ENCODE measurements at regions of chr6 and their contacts with region 1.

Region 1: GRCh38 chr6:36759148-36759759 is 61.6 kb downstream of the RAB44 start:
- DNase-seq: peak; percentile 37 to 86 (median 69)
- ATAC-seq: peak; percentile 38 to 61 (median 58)
- H3K4me3 ChIP-seq: no peak overlapping the region
- H3K4me3 Mint-ChIP-seq: no peak overlapping the region
- H3K27ac ChIP-seq: no peak overlapping the region
- H3K27ac Mint-ChIP-seq: no peak overlapping the region
- H3K4me1 ChIP-seq: peaks cover 7 to 47% of the 10 kb centered on the region in 2 experiments
- H3K4me1 Mint-ChIP-seq: peaks cover 28 to 48% (median 42%) of the 10 kb centered on the region in 3 donors
- H3K27me3 ChIP-seq: peaks cover 0 to 3% of the 10 kb centered on the region in 2 experiments
- H3K27me3 Mint-ChIP-seq: no peaks in the 10 kb centered on the region

Region 2: DNA sequence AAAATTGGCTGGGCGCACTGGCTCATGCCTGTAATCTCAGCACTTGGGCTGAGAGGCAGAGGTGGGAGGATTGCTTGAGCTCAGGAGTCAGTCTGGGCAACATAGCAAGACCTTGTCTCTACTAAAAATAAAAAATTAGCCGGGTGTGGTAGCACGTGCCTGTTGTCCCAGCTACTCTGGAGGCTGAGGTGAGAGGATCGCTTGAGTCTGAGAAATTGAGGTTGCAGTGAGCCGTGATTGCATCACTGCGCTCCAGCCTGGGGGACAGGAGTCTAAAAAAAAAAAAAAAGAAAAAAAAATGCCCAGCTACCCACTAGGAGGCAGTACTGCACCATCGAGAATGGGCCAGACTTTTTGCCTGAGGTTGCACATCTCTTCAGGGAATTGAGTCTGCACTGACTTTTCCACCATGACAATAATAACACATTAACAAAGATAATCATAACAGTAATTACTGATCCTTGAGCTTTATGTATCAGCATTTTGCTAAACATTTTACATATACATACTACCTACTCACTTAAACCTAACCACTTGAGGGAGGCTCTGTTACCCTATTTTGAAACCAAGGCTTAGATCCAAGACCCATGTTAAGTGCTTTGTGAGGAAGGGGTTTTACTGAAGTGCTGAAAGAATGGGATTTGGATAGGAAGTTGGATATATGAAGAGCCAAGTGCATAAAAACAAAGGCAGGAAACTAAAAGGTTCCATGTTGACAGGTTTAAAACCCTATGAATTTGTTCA is 144.1 kb before region 1 on chr6:
- CTCF ChIA-PET with region 1: interaction called, 3 to 20 read pairs
- POLR2A ChIA-PET with region 1: interaction called in 1 of 2 experiments, 5 read pairs
- DNase-seq: peak in 27 of 35 experiments; percentile 6 to 77 (median 28)
- ATAC-seq: peak in 3 of 4 experiments; percentile 41 to 60 (median 49)
- H3K4me3 ChIP-seq: no peak overlapping the region
- H3K4me3 Mint-ChIP-seq: no peak overlapping the region
- H3K27ac ChIP-seq: peak overlapping the region; percentile 41
- H3K27ac Mint-ChIP-seq: peak overlapping the region; percentile 43 to 75
- H3K4me1 ChIP-seq: peaks cover 0 to 3% of the 10 kb centered on the region in 2 experiments
- H3K4me1 Mint-ChIP-seq: peaks cover 13 to 20% (median 17%) of the 10 kb centered on the region in 3 donors
- H3K27me3 ChIP-seq: no peaks in the 10 kb centered on the region
- H3K27me3 Mint-ChIP-seq: no peaks in the 10 kb centered on the region